Sigmoid colon (tissue), 7 donors: ENCODE measurements at regions of chr11 and their contacts with region 1.

Region 1: DNA sequence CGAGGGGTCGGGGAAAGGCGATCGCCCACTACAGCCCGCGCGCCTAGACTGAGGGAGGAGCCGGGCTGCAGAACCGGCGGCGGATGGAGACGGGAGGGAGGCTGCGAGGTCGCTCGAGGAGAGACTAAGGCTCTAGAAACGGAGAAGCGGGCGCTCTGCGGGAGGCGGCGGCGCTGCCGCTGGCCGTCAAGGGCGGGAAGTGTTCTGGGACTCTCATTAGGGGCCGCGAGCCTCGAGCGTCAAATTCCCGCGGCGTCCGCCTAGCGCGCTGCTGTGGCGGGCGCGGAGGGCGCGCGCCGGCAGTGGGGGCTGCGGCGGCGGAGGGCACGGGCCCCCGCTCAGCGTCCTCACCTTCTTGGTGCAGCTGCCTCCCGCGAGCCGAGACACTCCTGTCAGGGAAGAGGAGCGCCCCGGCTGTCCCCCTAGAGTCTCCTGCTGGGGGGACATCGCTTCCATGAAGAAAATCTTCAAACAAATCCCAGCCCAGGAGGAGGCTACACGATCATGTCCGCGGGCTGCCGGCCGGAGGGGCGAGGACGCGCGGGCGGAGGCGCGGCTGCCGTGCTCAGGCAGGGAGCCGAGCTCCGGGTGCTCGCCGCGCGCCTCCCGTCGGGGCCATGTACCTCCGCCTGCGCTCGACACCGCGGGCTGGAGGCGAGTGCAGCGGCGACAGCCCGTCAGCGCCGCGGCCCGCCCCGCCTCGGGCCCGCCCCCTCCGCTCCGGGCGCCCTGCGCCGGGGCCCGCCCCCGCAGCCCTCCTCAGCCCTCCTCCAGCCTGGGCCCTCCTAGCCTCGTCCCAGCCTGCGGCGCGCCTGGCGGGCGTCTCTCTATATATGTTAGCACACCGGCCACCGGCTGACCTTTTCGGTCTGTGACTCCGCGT is at the start of gene ARHGAP20:
- DNase-seq: peak; percentile 85
- H3K4me3 ChIP-seq: peak within 1 kb of the TSS; percentile 55 to 76 (median 62)
- H3K27ac ChIP-seq: peak within 1 kb of the TSS; percentile 77 to 88 (median 82)
- H3K4me1 ChIP-seq: peaks cover 0 to 29% (median 19%) of the 10 kb centered on the region in 4 donors
- H3K27me3 ChIP-seq: no peaks in the 10 kb centered on the region
- CTCF ChIP-seq: no peak
- EP300 ChIP-seq: no peak
- POLR2A ChIP-seq: no peak
- total RNA-seq, gene ARHGAP20: 2.2 to 5.3 (median 4.3) TPM

Region 2: DNA sequence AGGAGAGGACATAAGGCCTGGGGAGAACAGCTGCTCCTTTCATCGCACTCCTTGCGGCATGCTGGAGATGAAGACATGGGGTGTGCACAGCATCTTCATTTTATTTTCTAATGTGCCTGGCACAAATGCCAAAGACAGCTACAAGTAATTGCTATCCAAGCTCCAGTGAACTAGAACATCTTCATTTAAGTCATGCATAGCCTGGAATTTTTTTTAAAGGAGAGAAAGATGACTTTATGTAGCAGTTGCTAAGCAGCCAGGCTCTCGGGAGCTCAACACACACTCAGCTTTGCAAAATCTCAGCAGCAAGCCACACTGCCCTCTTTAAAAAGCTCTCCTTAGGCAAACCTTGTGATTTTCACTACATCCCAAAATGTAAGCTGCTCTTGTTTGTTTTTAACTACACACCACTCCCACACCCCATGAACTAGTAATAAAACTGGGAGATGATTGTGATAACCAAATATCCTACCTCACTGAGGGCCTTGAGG is 369.0 kb after region 1 on chr11:
- intact Hi-C with region 1: loop called (anchors 10 kb)
- DNase-seq: no peak
- H3K4me3 ChIP-seq: no peak overlapping the region
- H3K27ac ChIP-seq: no peak overlapping the region
- H3K4me1 ChIP-seq: peaks cover 0 to 13% (median 8%) of the 10 kb centered on the region in 4 donors
- H3K27me3 ChIP-seq: no peaks in the 10 kb centered on the region
- CTCF ChIP-seq: no peak
- EP300 ChIP-seq: no peak
- POLR2A ChIP-seq: no peak

Region 3: GRCh38 chr11:111230122-111230465 is 518.1 kb after region 1 on chr11:
- intact Hi-C with region 1: loop called (anchors 2 kb)
- DNase-seq: no peak
- H3K4me3 ChIP-seq: peak overlapping the region in 2 of 4 donors; percentile 42 to 48
- H3K27ac ChIP-seq: no peak overlapping the region
- H3K4me1 ChIP-seq: peaks cover 0 to 9% (median 3%) of the 10 kb centered on the region in 4 donors
- H3K27me3 ChIP-seq: no peaks in the 10 kb centered on the region
- CTCF ChIP-seq: no peak
- EP300 ChIP-seq: no peak
- POLR2A ChIP-seq: no peak

Region 4: GRCh38 chr11:111272420-111272819 is 560.4 kb after region 1 on chr11:
- intact Hi-C with region 1: no loop called
- DNase-seq: no peak
- H3K4me3 ChIP-seq: no peak overlapping the region
- H3K27ac ChIP-seq: no peak overlapping the region
- H3K4me1 ChIP-seq: no peaks in the 10 kb centered on the region
- H3K27me3 ChIP-seq: no peaks in the 10 kb centered on the region
- CTCF ChIP-seq: no peak
- EP300 ChIP-seq: no peak
- POLR2A ChIP-seq: no peak